Mammary epithelial cell (primary cell): ENCODE measurements at regions of chr6 and their contacts with region 1.

Region 1: DNA sequence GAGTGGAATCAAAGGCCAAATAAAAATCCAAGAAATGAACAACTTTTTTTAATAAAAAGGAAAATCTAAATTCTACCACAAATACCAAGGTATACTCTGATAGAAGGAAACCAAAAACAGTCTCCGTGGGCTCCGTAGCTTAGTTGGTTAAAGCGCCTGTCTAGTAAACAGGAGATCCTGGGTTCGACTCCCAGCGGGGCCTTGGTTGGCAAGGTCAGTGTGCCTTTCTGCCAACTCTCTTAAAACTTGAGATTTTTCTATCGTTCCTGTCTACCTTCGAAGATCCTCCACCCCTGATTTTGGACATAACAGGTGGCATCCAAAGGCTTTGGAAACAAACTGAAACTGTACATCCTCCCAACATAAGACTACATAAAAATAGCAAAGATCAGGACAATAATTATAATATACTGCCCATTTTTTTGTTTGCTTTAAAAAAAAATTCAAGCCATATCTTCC is 197.9 kb downstream of the TRIM27 start:
- DNase-seq: peak; percentile 71
- H3K4me3 ChIP-seq: no peak overlapping the region
- H3K27ac ChIP-seq: no peak overlapping the region
- H3K4me1 ChIP-seq: no peaks in the 10 kb centered on the region
- H3K27me3 ChIP-seq: no peaks in the 10 kb centered on the region
- CTCF ChIP-seq: no peak

Region 2: DNA sequence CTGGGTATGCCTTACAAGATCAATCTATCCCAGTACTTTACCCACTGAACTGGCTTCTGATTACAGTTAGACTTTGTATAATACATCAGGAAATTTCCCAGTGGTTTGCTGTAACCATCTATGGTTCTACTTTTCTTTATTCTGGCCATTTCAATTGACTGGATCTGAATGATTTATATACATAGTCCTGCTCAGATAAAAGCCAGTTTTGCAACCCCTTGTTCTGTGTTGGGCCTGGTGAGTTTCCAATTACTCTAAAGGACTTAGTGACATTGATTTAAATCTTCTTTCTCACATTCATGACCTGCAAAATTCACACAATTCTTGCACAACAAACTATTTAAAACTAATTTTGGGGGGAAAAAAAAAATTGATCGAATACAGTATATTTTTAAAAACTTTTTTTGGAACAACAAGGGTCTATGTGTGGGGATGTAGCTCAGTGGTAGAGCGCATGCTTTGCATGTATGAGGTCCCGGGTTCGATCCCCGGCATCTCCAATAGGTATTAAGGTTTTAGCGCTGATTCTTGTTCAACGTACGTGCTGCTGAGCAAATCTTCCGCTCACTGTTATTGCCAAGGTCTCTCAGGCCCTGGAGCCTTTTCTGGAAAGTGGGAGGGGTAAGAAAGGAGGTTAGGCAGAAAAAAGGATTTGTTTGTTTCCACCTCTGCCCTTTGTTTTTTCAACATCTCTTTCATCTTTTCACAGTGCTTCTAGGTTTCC is 82.7 kb before region 1 on chr6:
- CTCF ChIA-PET with region 1: no interaction called
- dilution Hi-C with region 1: no loop called
- in situ Hi-C with region 1: no loop called
- intact Hi-C with region 1: no loop called
- DNase-seq: peak; percentile 86
- H3K4me3 ChIP-seq: no peak overlapping the region
- H3K27ac ChIP-seq: no peak overlapping the region
- H3K4me1 ChIP-seq: no peaks in the 10 kb centered on the region
- H3K27me3 ChIP-seq: no peaks in the 10 kb centered on the region
- CTCF ChIP-seq: no peak

Region 3: DNA sequence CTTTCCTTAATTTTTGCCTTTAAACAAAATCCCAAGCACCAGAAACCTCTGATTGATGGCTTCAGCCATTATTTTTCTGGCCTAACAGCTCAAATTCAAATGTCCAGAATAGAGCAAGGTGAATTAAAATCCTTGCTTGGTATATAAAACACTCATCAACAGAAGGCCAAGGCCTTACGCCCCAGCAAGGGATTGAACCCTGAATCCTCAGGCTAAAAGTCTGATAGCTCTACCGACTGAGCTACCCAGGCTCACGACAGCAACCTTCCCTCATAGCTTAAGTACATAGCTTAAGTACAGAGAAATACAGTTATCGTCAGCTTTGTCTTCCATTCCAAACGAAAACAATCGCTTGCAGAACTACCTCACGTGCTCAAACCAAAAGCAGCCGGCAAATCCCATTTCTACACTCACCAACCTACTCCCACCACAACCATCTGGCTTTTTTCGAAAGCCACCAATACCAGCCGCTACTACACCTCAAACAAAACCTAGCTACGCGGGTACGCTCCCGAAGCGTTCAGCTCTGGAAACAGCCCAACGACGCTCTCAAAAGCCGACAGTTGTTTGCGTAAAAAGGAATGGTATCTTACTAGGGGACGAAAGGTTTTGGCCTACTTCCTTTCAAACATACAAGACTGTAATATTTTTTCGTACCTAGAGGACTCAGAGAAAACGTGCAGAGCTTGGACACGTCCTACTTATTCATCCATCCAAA is 32.7 kb before region 1 on chr6:
- CTCF ChIA-PET with region 1: no interaction called
- dilution Hi-C with region 1: no loop called
- in situ Hi-C with region 1: no loop called
- intact Hi-C with region 1: no loop called
- DNase-seq: peak; percentile 16
- H3K4me3 ChIP-seq: no peak overlapping the region
- H3K27ac ChIP-seq: no peak overlapping the region
- H3K4me1 ChIP-seq: no peaks in the 10 kb centered on the region
- H3K27me3 ChIP-seq: no peaks in the 10 kb centered on the region
- CTCF ChIP-seq: no peak

Region 4: DNA sequence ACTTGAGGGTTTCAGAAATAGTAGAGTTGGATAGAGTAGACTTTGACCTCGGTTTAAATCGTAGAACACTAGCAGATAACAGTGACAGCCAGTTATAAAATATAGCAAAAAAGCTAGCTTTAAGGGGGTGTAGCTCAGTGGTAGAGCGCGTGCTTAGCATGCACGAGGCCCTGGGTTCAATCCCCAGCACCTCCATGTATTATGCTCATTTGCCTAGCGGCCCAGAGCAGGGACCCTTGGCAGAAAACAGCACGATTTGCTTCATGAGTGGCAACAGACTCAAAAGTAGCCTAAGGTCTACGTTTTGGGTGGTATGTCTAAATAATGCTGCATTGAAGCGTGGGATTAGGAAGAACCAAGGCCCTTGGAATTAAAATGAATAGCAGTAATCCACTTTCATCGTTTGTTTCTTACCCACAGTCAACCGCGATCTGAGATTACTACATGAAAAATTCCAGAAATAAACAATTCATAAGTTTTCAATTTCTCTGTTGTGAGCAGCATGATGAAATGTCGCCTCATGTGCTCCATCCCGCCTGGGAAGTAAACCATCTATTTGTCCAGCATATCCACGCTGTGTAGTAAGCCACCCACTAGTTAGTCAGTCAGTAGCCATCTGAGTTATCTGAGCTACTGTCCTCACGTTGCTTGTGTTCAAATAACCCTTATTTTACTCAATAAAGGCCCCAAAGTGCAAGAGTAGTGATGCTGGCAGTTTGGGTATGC is 15.3 kb before region 1 on chr6:
- CTCF ChIA-PET with region 1: no interaction called
- dilution Hi-C with region 1: no loop called
- in situ Hi-C with region 1: no loop called
- intact Hi-C with region 1: loop called (anchors 2 kb)
- DNase-seq: peak; percentile 67
- H3K4me3 ChIP-seq: no peak overlapping the region
- H3K27ac ChIP-seq: no peak overlapping the region
- H3K4me1 ChIP-seq: peaks cover 4% of the 10 kb centered on the region
- H3K27me3 ChIP-seq: no peaks in the 10 kb centered on the region
- CTCF ChIP-seq: no peak

Region 5: DNA sequence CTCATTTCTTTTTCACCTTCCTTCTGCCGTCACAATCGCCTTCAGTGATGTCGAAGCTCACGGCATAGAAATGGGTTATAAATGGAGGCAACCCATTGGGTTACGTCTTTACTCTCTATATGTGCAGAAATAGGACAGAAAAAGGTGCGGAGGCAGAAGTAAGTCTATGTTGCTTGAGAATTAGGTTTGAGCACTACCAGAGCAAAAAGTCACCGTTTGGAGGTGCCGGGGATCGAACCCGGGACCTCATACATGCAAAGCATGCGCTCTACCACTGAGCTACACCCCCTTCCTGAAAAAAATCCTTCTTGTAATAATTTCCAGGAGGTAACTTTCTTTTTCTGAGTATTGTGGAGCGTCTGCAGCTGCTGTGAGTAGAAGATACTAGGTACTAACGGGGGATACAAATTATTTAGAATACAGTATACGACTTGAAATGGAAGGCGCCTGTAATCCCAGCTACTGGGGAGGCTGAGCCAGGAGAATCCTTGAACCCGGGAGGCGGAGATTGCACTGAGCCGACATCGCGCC is 63.7 kb after region 1 on chr6:
- CTCF ChIA-PET with region 1: no interaction called
- dilution Hi-C with region 1: no loop called
- in situ Hi-C with region 1: no loop called
- intact Hi-C with region 1: loop called (anchors 5 kb)
- DNase-seq: peak; percentile 76
- H3K4me3 ChIP-seq: peak overlapping the region; percentile 49 to 72 (median 54)
- H3K27ac ChIP-seq: no peak overlapping the region
- H3K4me1 ChIP-seq: peaks cover 5% of the 10 kb centered on the region
- H3K27me3 ChIP-seq: peaks cover 32% of the 10 kb centered on the region
- CTCF ChIP-seq: no peak

Region 6: GRCh38 chr6:28802417-28803336 is 76.8 kb after region 1 on chr6:
- CTCF ChIA-PET with region 1: interaction called, 16 read pairs
- dilution Hi-C with region 1: no loop called
- in situ Hi-C with region 1: no loop called
- intact Hi-C with region 1: no loop called
- DNase-seq: peak; percentile 82
- H3K4me3 ChIP-seq: peak overlapping the region; percentile 20 to 44 (median 25)
- H3K27ac ChIP-seq: no peak overlapping the region
- H3K4me1 ChIP-seq: peaks cover 4% of the 10 kb centered on the region
- H3K27me3 ChIP-seq: no peaks in the 10 kb centered on the region
- CTCF ChIP-seq: no peak